ENCODE measurements at regions of chr16 and their contacts with region 1.

Region 1: DNA sequence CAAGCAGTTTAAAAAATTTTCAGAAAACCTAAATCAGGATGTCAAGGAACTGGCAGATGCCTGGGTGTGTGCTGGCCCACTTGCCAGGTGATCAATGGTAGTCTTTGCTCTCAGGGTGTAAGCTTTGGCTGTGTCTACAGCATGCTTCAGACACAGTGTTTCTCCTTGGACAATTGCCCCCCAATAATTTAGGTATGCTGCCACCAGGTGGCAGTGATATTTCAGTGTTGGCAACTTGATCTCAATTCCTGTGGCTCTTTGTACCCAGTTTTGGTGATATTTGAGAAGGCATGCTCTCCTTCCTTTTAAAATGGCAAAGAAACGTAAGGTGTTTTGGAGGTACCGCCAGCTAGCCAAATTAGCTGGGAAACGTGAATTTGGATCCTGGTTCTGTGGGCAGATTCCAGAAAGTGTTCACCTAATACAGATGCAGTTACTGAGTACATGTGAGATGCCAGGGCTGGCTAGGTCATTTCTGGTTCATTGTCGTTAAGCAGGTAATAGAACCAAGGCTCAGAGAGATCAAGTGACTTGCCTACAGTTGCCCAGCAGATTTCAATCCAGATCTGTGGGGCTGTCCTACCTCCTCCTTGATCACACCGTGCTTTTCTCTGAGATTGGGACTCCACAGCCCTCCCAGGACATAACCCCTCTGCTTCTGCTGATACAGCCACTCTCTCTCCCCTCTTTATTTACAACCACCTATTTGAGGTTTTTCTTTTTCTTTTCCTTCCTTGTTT is 155.6 kb upstream of the PLCG2 start:
- DNase-seq: peak; percentile 73
- H3K4me3 Mint-ChIP-seq: no peak overlapping the region
- H3K27ac Mint-ChIP-seq: peak overlapping the region; percentile 8
- H3K4me1 Mint-ChIP-seq: peaks cover 9% of the 10 kb centered on the region
- H3K27me3 Mint-ChIP-seq: no peaks in the 10 kb centered on the region

Region 2: DNA sequence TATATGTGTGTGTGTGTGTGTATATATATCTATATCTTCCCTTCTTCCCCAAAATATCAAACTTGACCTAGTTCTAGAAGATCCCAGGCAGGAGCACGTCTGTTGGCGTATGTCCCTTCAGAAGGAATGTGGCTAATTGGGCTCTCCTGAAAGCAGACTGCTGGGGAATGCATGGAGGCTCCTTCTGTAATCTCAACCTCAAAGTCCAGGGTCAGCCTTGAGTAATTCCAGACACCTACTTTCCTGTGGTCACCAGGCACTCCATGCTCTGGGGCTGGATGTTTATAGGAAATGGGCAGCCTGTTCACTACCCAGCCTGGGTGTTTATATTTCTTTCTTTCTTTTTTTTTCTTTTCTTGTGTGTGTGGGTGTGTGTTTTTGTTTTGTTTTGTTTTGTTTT is 371.7 kb before region 1 on chr16:
- CTCF ChIA-PET with region 1: no interaction called
- POLR2A ChIA-PET with region 1: no interaction called
- intact Hi-C with region 1: no loop called
- DNase-seq: no peak
- H3K4me3 Mint-ChIP-seq: no peak overlapping the region
- H3K27ac Mint-ChIP-seq: no peak overlapping the region
- H3K4me1 Mint-ChIP-seq: no peaks in the 10 kb centered on the region
- H3K27me3 Mint-ChIP-seq: no peaks in the 10 kb centered on the region

Region 3: DNA sequence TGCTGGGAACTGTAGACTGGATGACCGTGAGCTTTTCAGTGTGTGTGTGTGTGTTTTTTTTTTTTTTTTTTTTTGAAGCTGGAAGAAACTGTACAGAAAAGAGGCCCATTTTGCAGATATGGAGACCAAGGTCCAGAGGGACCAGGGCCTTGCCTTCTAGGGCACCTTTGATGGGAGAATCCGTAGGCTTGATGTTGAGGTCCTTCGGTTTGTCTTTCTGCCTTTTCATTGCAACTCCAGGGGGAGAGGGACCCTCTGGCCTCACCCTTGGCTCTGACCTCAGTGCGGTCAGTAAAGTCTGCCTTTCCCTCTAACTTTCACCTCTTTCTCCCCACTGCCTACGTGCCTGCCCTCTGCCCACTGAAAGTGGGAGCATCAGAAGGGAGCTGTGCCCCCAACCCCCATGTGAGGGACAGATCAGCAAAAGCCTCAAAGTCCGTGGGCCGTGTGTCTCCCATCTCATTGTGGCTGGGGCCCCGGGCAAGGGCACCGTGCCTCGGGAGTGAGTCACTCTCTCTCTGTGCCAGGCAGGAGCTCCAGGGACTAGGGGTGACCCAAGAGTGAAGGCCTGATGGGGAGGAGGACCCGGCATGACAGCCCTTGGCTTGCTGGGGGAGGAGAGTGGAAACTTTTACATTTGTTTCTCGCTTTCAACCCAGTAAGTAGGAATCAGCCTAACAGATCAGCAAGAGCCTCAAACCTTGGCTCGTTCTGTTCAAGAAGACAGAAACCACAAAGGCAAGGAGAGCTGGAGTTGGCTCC is 55.4 kb before region 1 on chr16:
- CTCF ChIA-PET with region 1: no interaction called
- POLR2A ChIA-PET with region 1: no interaction called
- intact Hi-C with region 1: loop called (anchors 1 kb)
- DNase-seq: peak; percentile 83
- H3K4me3 Mint-ChIP-seq: no peak overlapping the region
- H3K27ac Mint-ChIP-seq: peak overlapping the region; percentile 70
- H3K4me1 Mint-ChIP-seq: peaks cover 28% of the 10 kb centered on the region
- H3K27me3 Mint-ChIP-seq: no peaks in the 10 kb centered on the region

Region 4: GRCh38 chr16:81696961-81697615 is 73.6 kb after region 1 on chr16:
- CTCF ChIA-PET with region 1: interaction called, 53 read pairs
- POLR2A ChIA-PET with region 1: no interaction called
- intact Hi-C with region 1: loop called (anchors 1 kb)
- DNase-seq: peak; percentile 73
- H3K4me3 Mint-ChIP-seq: no peak overlapping the region
- H3K27ac Mint-ChIP-seq: no peak overlapping the region
- H3K4me1 Mint-ChIP-seq: no peaks in the 10 kb centered on the region
- H3K27me3 Mint-ChIP-seq: no peaks in the 10 kb centered on the region

Region 5: GRCh38 chr16:81723098-81723723 is 99.7 kb after region 1 on chr16:
- CTCF ChIA-PET with region 1: interaction called, 65 read pairs
- POLR2A ChIA-PET with region 1: no interaction called
- intact Hi-C with region 1: loop called (anchors 1 kb)
- DNase-seq: peak; percentile 33
- H3K4me3 Mint-ChIP-seq: no peak overlapping the region
- H3K27ac Mint-ChIP-seq: peak overlapping the region; percentile 60
- H3K4me1 Mint-ChIP-seq: peaks cover 13% of the 10 kb centered on the region
- H3K27me3 Mint-ChIP-seq: no peaks in the 10 kb centered on the region

Region 6: DNA sequence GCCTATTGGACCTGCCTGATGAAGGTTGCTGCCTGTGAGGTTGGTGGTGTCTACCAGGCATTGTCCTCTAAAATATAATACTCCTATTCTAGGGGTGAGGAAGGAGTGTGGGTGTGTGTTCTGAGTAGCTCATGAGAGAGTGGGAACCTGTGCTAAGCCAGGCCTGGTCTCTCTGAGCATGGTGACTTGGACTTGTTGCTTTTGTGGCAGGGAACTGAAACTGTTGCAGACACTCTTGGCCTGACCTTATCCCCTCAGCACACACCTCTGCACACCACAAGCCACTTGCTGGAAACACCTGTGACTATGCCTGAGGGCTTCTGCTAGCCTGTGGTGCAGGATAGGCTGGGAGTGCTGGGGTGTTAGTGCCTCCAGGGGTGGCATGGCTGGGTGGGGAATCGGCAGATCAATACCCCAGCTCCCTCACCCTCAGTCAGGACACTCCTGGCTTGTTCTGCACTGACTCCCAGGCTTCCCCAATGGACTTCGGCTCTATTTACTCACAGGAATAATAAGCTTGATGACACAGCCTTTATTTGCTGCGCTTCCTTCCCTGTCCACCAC is 185.5 kb after region 1 on chr16:
- CTCF ChIA-PET with region 1: no interaction called
- POLR2A ChIA-PET with region 1: no interaction called
- intact Hi-C with region 1: no loop called
- DNase-seq: peak; percentile 24
- H3K4me3 Mint-ChIP-seq: no peak overlapping the region
- H3K27ac Mint-ChIP-seq: no peak overlapping the region
- H3K4me1 Mint-ChIP-seq: no peaks in the 10 kb centered on the region
- H3K27me3 Mint-ChIP-seq: peaks cover 2% of the 10 kb centered on the region